ENCODE measurements at regions of chr3 and their contacts with region 1.

Region 1: DNA sequence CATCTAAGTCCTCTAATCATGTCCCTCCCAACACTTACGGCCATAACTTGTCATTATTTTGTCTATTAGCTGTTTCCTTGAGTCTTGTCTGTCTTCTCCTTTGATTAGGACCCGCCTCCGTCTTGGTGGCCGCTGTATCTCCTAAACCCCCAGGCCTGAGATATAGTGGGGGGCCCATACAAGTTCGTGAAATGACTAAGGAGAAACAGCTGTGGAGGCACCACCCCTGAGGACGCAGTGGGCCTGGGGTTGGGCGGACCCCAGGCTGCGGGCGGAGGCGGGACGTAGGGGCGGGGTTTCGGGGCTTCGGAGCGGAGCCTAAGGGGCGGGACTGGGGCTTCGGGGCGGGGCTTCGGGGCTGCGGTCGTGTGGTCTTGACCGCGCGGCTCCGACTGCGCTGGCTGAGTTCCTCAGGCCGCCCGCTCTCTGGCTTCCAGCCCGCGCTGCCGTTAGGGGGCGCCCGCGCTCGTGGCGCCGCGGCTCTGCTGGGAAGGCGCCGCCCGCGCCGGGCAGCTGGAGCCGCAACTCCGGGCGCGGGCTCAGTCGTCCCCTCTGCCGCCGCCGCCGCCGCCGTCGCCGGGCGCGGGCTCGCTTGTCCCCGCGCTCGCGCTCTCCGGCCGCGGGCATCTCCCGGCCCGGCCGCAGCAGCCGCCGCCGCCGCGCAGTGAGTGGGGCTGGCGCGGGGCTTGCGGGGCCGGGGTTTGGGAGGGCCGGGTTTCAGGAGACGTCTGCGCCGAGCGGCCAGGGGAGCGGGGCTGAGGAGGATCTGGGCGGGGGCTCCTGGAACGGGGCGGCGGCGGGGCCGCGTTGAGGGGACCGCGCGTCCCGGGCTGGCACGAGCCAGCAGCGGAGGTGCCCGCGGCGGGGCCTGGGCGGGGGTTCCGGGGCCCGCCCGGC is at the start of gene KCTD6:
- DNase-seq: peak; percentile 87
- H3K4me3 Mint-ChIP-seq: peak within 1 kb of the TSS; percentile 93
- H3K27ac Mint-ChIP-seq: peak within 1 kb of the TSS; percentile 85
- H3K4me1 Mint-ChIP-seq: peaks cover 54% of the 10 kb centered on the region
- H3K27me3 Mint-ChIP-seq: peaks cover 40% of the 10 kb centered on the region
- total RNA-seq, gene KCTD6: 7.0 and 8.9 TPM in 2 replicates

Region 2: DNA sequence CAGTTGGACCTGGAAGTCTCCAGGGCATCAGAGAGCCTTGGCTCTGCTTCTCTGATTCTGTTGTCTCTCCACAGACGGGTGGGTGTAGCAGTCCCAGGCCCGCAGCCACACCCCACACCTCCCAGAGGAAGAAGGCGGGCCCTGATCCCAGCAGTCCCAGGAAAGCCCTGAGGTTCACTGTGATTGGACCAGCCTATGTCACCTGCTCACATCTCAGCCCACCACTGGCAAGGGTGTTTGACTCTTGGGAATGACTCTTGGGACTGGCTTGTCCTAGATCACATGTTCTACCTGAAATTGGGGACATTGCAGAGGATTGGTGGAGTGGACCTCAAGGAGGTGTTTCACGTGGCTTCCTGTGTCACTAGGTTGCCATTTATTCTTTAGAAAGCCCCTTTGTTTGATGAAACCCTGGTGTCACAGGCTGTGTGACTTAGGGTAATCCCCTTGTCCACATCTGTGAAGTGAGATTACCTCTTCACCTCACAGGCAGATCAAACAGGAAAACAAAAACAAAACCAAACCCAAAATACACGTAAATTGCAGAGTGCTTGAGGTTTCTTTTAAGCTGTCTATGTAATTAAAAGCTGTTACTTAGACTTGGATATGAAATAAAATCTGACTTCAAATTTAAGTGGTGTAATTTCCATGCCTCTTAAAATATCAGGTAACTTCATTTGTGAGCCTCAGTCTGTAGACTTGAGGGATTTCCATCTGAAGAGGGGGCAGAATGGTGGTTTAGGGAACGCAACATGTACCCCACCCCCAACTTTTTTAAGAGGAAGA is 456.8 kb before region 1 on chr3:
- intact Hi-C with region 1: loop called (anchors 10 kb)
- DNase-seq: peak; percentile 66
- H3K4me3 Mint-ChIP-seq: peak overlapping the region; percentile 78
- H3K27ac Mint-ChIP-seq: peak overlapping the region; percentile 85
- H3K4me1 Mint-ChIP-seq: peaks cover 51% of the 10 kb centered on the region
- H3K27me3 Mint-ChIP-seq: peaks cover 7% of the 10 kb centered on the region

Region 3: DNA sequence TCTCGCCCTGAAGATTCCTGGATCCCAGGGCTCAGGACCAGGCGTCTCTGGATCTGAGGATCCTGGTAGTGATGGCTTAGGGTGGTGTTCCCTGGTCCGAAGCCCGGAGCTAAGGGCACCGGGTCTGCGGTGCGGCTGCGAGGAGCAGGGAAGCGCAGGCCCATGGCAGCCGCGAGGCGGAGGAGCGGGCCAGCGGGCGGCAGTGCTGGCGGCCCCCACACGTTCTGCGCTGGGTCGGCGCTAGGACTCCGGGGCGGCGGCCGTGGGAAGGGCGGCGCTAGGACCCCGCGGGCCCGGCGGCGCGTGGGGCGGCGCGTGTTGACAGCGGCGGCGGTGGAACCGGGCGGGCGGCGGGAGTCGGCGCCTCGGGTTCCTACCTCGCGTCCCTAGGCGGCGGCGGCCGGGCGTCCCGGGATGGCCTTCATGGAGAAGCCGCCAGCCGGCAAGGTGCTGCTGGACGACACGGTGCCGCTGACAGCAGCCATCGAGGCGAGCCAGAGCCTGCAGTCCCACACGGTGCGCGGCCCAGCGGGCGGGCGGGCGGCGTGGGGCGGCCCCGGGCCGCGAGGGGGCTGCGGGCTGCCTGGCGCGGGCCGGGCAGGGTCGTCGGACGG is 159.1 kb before region 1 on chr3 and contains the start of gene PXK:
- intact Hi-C with region 1: loop called (anchors 1 kb)
- DNase-seq: peak; percentile 83
- H3K4me3 Mint-ChIP-seq: peak within 1 kb of the TSS; percentile 100
- H3K27ac Mint-ChIP-seq: peak within 1 kb of the TSS; percentile 99
- H3K4me1 Mint-ChIP-seq: peaks cover 48% of the 10 kb centered on the region
- H3K27me3 Mint-ChIP-seq: no peaks in the 10 kb centered on the region
- total RNA-seq, gene PXK: 43.4 and 48.1 TPM in 2 replicates

Region 4: DNA sequence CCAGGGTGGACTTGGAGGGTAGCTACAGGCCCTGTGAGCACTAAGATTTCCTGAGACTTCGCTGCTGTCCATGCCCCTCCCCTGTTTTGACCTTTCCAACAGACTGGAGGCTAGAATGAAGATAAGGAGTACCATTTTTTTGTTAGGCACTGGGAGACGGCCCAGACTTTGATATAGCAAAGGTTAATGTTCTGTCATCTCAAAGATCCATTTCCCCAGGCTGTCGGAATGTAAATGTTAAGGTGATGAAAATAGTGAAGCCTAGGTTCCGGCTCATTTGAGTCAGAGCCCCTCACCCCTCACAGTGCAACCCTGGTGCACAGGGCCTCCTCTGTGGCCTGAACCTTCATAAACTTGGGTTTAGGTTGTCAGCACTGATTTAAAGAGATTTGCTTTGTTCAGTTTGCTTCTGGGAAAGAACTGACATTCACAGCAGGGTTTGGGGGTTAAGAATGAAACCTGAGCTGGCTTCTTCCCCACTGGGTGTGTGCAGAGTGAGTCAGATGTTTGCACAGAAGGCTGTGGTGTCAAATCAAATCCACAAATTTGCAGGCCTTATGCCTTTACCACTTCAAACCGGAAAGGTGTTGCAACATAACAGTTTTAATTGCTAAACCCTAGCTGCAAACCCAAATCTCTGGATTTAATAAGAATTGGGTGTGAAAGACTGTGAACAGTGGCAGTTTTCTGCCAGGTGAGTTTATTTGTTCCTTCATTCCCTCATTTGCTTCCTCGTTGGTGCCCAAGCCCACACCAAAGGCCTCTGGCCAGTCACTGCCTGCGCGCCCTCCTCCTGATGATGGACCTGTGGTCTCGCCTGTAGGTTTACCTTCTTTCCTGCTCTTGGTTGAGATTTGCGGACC is 20.5 kb before region 1 on chr3:
- intact Hi-C with region 1: loop called (anchors 1 kb)
- DNase-seq: peak; percentile 73
- H3K4me3 Mint-ChIP-seq: peak overlapping the region; percentile 37
- H3K27ac Mint-ChIP-seq: peak overlapping the region; percentile 68
- H3K4me1 Mint-ChIP-seq: peaks cover 59% of the 10 kb centered on the region
- H3K27me3 Mint-ChIP-seq: peaks cover 8% of the 10 kb centered on the region

Region 5: DNA sequence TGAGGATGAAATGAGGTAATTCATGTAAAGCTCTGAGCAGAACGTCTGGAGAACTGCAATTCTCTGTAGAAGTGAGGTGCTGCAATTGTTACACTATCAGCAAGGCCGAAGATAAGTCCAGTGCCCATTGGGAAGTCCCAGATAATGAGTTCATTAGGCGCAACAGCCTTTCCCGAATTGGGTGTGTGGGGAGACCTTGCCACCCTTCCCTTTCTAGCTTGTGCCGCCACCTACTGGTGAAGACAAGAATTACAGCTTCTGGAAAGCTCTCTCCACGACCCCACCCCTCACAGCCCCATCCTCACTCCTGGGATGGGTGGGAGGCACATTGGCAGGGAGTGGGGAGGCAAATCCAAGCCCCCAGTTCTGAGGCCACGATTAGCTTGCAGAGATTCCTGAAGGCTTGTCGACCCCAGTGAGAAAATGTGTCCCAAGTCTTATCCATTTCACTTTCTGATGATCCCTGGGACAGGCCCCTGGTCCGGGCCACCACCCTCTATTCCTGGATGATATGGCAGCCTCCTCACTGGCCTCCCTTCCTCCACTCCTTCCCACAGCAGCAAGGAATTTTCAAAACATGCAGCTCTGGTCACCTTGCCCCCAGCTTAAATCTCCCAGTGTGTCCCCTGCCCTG is 138.4 kb after region 1 on chr3:
- intact Hi-C with region 1: loop called (anchors 1 kb)
- DNase-seq: peak; percentile 46
- H3K4me3 Mint-ChIP-seq: no peak overlapping the region
- H3K27ac Mint-ChIP-seq: no peak overlapping the region
- H3K4me1 Mint-ChIP-seq: no peaks in the 10 kb centered on the region
- H3K27me3 Mint-ChIP-seq: no peaks in the 10 kb centered on the region